Heart left ventricle (tissue), 16 donors: ENCODE measurements at regions of chrX and their contacts with region 1.

Region 1: DNA sequence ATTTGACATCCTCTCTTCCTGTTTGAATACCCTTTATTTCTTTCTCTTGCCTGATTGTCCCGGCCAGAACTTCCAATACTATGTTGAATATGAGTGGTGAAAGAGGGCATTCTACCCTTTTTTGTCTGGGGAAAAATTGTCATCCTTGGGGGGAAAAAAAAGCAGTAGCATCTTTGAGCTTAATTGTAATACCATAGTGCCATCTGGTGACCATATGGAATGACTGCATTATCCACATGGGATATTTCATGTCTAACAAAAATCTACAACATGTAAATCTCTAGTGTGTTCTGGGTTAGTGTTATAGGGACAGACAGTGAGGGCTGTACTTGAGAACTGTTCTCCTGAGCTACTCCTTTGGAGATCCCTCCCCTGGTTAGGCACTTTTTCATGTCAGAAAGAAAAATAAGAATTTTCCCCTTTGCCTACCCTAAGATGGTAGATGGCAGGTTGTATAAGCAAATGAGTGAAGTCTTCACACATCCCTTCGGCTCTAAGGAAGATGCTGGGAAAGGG is 26.0 kb downstream of the CAPN6 start:
- DNase-seq: no peak
- ATAC-seq: no peak
- H3K4me3 ChIP-seq: no peak overlapping the region
- H3K27ac ChIP-seq: no peak overlapping the region
- H3K4me1 ChIP-seq: no peaks in the 10 kb centered on the region
- H3K27me3 ChIP-seq: peaks cover 0 to 38% (median 0%) of the 10 kb centered on the region in 9 donors
- CTCF ChIP-seq: peak in 10 of 12 donors; percentile 18 to 49 (median 29)
- POLR2A ChIP-seq: no peak

Region 2: DNA sequence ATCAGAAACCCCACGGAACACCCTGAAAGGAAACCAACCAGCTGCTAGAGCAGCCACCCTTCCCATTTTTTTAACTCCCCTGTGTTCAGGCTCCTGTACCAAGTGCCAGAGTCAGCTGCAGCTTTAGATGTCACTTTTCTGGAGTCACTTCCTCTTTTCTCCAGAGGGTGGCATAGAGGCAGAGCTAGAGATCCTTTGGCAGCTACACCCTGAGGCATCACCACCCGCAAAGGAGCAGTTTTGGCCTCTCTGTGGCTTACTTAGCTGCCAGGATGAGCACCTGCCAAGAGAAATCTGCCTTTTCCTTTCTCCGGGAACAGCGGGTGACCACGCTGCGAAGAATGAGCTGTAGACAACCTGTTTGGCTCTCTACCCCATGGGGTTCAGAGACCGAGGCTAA is 390.7 kb before region 1 on chrX:
- intact Hi-C with region 1: loop called in 5 of 10 experiments (anchors 5 to 10 kb)
- DNase-seq: no peak
- ATAC-seq: no peak
- H3K4me3 ChIP-seq: no peak overlapping the region
- H3K27ac ChIP-seq: no peak overlapping the region
- H3K4me1 ChIP-seq: no peaks in the 10 kb centered on the region
- H3K27me3 ChIP-seq: peaks cover 0 to 14% (median 0%) of the 10 kb centered on the region in 9 donors
- CTCF ChIP-seq: peak in 5 of 12 donors; percentile 20 to 28 (median 22)
- POLR2A ChIP-seq: no peak

Region 3: GRCh38 chrX:110987292-110987691 is 257.0 kb before region 1 on chrX:
- intact Hi-C with region 1: loop called in 1 of 10 experiments (anchors 10 kb)
- DNase-seq: no peak
- ATAC-seq: no peak
- H3K4me3 ChIP-seq: no peak overlapping the region
- H3K27ac ChIP-seq: no peak overlapping the region
- H3K4me1 ChIP-seq: no peaks in the 10 kb centered on the region
- H3K27me3 ChIP-seq: peaks cover 0 to 35% (median 0%) of the 10 kb centered on the region in 9 donors
- CTCF ChIP-seq: no peak
- POLR2A ChIP-seq: no peak